ENCODE measurements at regions of chr6 and their contacts with region 1.

Region 1: DNA sequence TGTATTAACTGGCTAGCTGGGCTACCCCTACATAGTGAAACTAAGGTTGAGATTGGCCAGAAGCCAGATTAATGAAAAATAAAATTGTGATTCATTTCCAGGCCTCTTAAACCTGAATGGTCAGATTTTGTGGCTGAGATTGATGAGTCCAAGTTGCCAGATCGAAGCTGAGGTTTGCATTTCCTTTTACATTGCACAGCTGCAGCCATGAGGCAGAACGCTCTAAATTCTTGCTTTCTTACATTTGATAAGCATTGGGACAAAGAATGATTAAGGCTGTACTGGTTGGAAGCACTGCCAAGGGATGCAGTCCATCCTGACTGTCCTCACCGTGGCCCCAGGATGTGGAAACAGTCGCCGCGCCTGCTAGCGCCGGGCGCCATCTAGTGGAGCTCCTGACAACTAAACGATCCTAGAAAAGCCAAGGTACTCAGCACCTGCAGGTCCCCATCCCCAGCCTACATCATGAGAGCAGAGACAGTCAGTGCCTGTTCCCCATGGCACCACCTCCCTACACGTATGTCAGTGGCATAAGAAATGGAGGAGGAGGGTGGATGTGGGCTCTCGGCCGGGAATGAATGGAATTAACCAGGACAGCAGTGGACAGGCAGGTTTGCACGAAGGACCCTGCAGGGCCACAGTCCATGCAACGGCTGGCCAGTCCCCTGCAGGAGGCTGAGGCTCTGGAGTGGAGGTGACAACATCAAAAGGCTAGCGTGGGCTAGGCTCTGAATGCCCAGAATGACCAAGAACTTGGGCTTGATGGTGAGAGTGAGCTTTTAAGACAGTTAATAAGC is 19.0 kb downstream of the PXDC1 start:
- DNase-seq: peak; percentile 29 to 83 (median 68)
- ATAC-seq: peak; percentile 76
- H3K4me3 ChIP-seq: no peak overlapping the region
- H3K4me3 Mint-ChIP-seq: no peak overlapping the region
- H3K27ac ChIP-seq: no peak overlapping the region
- H3K27ac Mint-ChIP-seq: no peak overlapping the region
- H3K4me1 ChIP-seq: no peaks in the 10 kb centered on the region
- H3K4me1 Mint-ChIP-seq: peaks cover 2% of the 10 kb centered on the region
- H3K27me3 ChIP-seq: no peaks in the 10 kb centered on the region
- H3K27me3 Mint-ChIP-seq: peaks cover 11% of the 10 kb centered on the region
- CTCF ChIP-seq: peak; percentile 66

Region 2: GRCh38 chr6:2478200-2478599 is 1254.3 kb before region 1 on chr6:
- CTCF ChIA-PET with region 1: no interaction called
- POLR2A ChIA-PET with region 1: no interaction called
- intact Hi-C with region 1: no loop called
- DNase-seq: no peak
- ATAC-seq: no peak
- H3K4me3 ChIP-seq: no peak overlapping the region
- H3K4me3 Mint-ChIP-seq: no peak overlapping the region
- H3K27ac ChIP-seq: no peak overlapping the region
- H3K27ac Mint-ChIP-seq: no peak overlapping the region
- H3K4me1 ChIP-seq: no peaks in the 10 kb centered on the region
- H3K4me1 Mint-ChIP-seq: no peaks in the 10 kb centered on the region
- H3K27me3 ChIP-seq: no peaks in the 10 kb centered on the region
- H3K27me3 Mint-ChIP-seq: peaks cover 14% of the 10 kb centered on the region
- CTCF ChIP-seq: no peak

Region 3: DNA sequence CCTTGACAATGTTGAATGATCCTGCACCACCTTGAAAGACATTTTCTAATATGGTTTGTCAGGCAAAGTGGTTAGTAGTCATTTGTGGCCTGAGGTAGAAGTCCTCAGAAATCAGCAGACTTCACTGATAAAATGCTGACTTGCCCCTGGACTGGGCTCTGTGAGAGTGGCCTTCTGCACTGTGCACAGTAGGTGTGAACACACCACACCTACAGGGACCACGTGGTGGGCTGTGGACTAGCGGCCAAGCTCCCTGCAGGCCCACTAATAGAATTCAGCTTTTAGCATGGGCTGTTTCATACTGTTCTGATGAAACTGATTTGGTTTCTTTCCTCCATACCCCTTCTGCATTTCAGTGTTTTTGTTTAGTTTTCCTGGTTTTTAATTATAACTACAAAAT is 606.7 kb before region 1 on chr6:
- CTCF ChIA-PET with region 1: interaction called, 8 read pairs
- POLR2A ChIA-PET with region 1: no interaction called
- intact Hi-C with region 1: loop called (anchors 1 to 5 kb)
- DNase-seq: no peak
- ATAC-seq: no peak
- H3K4me3 ChIP-seq: no peak overlapping the region
- H3K4me3 Mint-ChIP-seq: no peak overlapping the region
- H3K27ac ChIP-seq: no peak overlapping the region
- H3K27ac Mint-ChIP-seq: no peak overlapping the region
- H3K4me1 ChIP-seq: no peaks in the 10 kb centered on the region
- H3K4me1 Mint-ChIP-seq: peaks cover 4% of the 10 kb centered on the region
- H3K27me3 ChIP-seq: no peaks in the 10 kb centered on the region
- H3K27me3 Mint-ChIP-seq: no peaks in the 10 kb centered on the region
- CTCF ChIP-seq: no peak

Region 4: DNA sequence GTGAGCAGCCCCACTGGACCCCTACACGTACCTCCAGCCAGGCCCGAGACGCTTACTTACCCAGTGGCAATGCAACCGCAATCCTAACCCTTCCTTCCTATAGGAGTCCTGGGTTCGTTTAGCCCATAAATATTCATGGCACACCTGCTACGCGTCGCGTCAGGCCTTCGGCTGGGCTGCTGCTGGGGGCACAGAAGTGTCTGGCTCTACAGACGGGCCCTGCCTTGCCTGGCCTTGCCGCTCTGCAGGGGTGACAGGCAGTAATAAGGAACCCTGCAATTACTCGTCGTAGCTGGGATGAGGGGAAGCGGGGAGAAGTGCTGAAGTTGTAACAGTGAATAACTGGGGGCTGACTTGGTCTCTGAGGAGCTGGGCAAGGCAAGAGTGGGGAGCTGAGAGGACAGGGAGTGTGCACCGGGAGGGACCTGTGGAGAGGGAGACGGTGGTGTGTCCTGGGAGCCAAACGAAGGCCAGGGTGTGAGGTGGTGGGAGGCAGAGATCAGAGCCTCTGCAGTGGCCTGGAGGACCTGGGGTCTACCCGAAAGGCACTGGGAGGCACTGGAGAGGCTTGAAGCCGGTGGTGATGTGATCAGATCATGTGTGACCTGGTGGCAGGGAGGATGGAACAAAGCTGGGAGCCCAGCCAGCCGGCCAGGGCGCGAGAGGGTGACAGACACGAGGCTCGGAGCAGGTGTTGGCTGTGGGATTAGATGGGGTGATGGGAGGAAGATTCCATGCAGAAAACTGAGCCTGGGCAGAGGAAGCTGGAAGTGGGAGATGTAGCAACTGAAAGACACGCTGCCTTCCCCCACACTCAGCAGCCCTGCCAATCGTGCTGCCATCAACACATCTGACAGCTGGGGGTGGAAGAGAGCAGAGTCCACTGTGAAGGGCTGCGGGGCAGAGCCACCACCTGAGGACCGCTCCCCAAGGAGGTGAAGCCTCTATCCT is 437.3 kb before region 1 on chr6:
- CTCF ChIA-PET with region 1: interaction called, 13 read pairs
- POLR2A ChIA-PET with region 1: no interaction called
- intact Hi-C with region 1: no loop called
- DNase-seq: no peak
- ATAC-seq: no peak
- H3K4me3 ChIP-seq: no peak overlapping the region
- H3K4me3 Mint-ChIP-seq: no peak overlapping the region
- H3K27ac ChIP-seq: no peak overlapping the region
- H3K27ac Mint-ChIP-seq: no peak overlapping the region
- H3K4me1 ChIP-seq: no peaks in the 10 kb centered on the region
- H3K4me1 Mint-ChIP-seq: no peaks in the 10 kb centered on the region
- H3K27me3 ChIP-seq: no peaks in the 10 kb centered on the region
- H3K27me3 Mint-ChIP-seq: no peaks in the 10 kb centered on the region
- CTCF ChIP-seq: no peak

Region 5: GRCh38 chr6:3456755-3457466 is 275.6 kb before region 1 on chr6 and contains the start of gene SLC22A23:
- CTCF ChIA-PET with region 1: interaction called, 7 read pairs
- POLR2A ChIA-PET with region 1: no interaction called
- intact Hi-C with region 1: loop called in 1 of 2 experiments (anchors 5 kb)
- DNase-seq: peak; percentile 50 to 84 (median 74)
- ATAC-seq: peak; percentile 61
- H3K4me3 ChIP-seq: peak within 1 kb of the TSS; percentile 47 to 52
- H3K4me3 Mint-ChIP-seq: peak within 1 kb of the TSS; percentile 83
- H3K27ac ChIP-seq: no peak within 1 kb of the TSS
- H3K27ac Mint-ChIP-seq: peak within 1 kb of the TSS; percentile 58
- H3K4me1 ChIP-seq: peaks cover 22% of the 10 kb centered on the region
- H3K4me1 Mint-ChIP-seq: peaks cover 6% of the 10 kb centered on the region
- H3K27me3 ChIP-seq: peaks cover 0 to 24% of the 10 kb centered on the region in 2 experiments
- H3K27me3 Mint-ChIP-seq: peaks cover 14% of the 10 kb centered on the region
- CTCF ChIP-seq: peak; percentile 68
- total RNA-seq, gene SLC22A23: 3.4 to 4.8 TPM

Region 6: DNA sequence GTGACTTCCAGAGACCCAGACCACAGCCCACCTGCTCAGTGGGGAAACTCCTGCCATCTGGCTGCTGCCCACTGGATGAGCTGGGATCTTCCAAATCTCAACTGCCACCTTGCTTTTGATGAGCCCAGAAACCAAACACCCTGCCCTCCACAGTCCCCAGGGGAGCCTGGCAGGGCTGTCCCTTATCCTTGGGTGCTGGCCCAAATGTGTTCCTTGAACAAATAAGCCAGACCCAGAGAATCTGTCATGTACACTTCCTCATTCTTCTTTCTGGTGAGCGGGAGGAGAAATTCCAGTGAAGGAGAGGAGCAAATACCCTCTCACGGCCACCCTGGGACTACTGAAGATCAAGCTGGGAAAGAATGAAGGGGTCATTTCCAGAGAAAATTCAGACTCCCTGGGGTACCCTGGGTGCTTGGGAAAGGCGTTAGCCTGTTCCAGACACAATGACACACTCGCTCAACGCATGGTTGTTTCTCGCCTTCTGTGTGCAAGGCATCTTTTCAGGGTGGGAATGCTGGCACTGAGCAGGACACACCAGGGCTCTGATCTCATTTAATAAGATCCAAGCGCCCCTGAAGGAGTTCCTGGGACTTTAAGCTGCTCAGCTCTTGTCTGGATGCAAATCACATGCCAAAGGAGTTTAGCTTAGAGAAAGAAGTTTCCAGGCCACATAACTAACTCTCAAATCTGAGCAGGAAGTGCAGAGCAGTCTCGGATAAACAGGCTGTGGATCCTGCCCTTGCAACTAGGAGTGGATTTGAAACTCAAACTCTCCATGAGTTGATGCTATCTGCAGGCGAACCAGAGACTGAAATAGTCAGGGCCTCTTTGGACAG is 19.5 kb before region 1 on chr6:
- CTCF ChIA-PET with region 1: interaction called, 15 read pairs
- POLR2A ChIA-PET with region 1: no interaction called
- intact Hi-C with region 1: no loop called
- DNase-seq: no peak
- ATAC-seq: no peak
- H3K4me3 ChIP-seq: no peak overlapping the region
- H3K4me3 Mint-ChIP-seq: no peak overlapping the region
- H3K27ac ChIP-seq: no peak overlapping the region
- H3K27ac Mint-ChIP-seq: no peak overlapping the region
- H3K4me1 ChIP-seq: no peaks in the 10 kb centered on the region
- H3K4me1 Mint-ChIP-seq: peaks cover 8% of the 10 kb centered on the region
- H3K27me3 ChIP-seq: no peaks in the 10 kb centered on the region
- H3K27me3 Mint-ChIP-seq: no peaks in the 10 kb centered on the region
- CTCF ChIP-seq: no peak

Region 7: GRCh38 chr6:3748208-3749066 is 15.9 kb after region 1 on chr6:
- CTCF ChIA-PET with region 1: interaction called, 28 read pairs
- POLR2A ChIA-PET with region 1: no interaction called
- intact Hi-C with region 1: no loop called
- DNase-seq: peak in 3 of 9 experiments; percentile 36 to 45 (median 37)
- ATAC-seq: no peak
- H3K4me3 ChIP-seq: no peak overlapping the region
- H3K4me3 Mint-ChIP-seq: no peak overlapping the region
- H3K27ac ChIP-seq: no peak overlapping the region
- H3K27ac Mint-ChIP-seq: no peak overlapping the region
- H3K4me1 ChIP-seq: peaks cover 4% of the 10 kb centered on the region
- H3K4me1 Mint-ChIP-seq: peaks cover 9% of the 10 kb centered on the region
- H3K27me3 ChIP-seq: peaks cover 11 to 21% of the 10 kb centered on the region in 2 experiments
- H3K27me3 Mint-ChIP-seq: peaks cover 32% of the 10 kb centered on the region
- CTCF ChIP-seq: peak; percentile 25